OCI-LY7 (cell line): ENCODE measurements at regions of chr16 and their contacts with region 1.

Region 1: GRCh38 chr16:75198135-75198600 is 8.8 kb downstream of the CTRB2 start:
- DNase-seq: no peak
- H3K4me3 ChIP-seq: no peak overlapping the region
- H3K27ac ChIP-seq: no peak overlapping the region
- H3K4me1 ChIP-seq: peaks cover 10% of the 10 kb centered on the region
- CTCF ChIP-seq: no peak

Region 2: DNA sequence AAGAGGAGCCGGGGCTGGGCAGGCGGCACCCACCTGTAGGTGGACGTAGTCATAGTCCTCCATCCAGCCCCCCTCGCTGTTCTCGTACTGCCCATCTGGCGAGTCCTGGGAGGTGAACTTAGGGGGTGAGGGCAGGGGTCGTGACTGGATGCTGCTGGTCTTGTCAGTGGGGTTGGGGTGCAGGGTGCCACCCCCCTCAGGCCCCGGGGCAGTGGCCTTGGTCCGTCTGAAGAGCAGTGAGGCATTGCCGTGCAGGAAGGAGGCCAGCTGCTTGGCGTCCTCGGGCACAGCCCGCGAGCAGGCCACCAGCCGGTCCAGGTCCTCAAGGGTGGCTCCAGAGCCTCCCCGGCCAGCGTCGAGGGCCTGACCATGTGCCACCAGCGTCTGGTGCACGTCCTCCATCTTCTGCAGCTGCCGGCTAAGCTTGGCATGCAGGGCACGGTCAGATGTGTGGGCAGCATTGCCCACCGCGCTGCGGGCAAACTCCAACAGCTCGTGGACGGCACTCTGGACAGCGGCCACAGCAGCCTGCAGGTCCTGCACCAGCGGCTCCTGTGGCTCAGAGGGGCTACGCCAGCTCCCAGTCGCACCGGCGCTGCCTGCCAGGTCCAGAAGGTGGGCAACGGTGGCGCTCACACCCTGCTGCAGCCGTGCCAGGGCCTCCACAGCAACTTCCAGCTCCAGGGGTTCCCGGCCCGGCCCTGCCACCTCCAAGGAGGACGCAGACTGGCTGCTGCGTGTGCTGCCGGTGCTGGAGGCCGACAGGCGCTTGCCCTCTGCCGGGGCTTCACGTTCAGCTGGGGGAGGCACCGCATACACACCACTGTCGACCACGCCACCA is 36.9 kb after region 1 on chr16:
- CTCF ChIA-PET with region 1: interaction called, 8 read pairs
- POLR2A ChIA-PET with region 1: no interaction called
- intact Hi-C with region 1: loop called (anchors 5 kb)
- DNase-seq: no peak
- H3K4me3 ChIP-seq: no peak overlapping the region
- H3K27ac ChIP-seq: no peak overlapping the region
- H3K4me1 ChIP-seq: no peaks in the 10 kb centered on the region
- CTCF ChIP-seq: no peak

Region 3: DNA sequence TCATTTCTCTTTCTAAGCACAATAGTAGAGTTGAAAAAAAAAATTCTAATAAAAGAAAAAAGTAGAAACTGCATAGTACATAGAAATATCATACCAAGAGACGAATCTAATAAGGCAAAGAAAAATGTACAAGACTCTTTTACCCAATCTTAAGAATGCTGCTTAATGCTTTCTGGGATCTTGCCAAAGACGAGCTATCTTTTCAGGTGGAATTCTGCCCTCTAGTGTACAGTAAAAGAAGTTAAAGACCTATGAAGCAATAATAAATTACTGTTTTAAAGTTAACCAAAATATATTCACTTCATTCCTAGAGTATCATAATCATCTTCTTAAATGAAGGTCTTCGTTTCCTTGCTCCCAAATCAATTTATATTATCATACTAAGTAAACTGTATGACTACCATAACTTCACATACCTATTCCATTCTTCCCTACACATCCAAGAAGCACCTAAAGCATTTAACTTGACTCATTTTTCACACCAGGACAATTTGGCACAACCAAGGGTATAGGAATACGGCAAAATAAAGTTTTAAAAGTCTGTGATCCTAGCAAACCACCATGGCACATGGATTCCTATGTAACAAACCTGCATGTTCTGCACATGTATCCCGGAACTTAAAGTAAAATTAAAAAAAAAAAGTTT is 187.5 kb after region 1 on chr16:
- CTCF ChIA-PET with region 1: interaction called, 7 read pairs
- POLR2A ChIA-PET with region 1: interaction called, 4 read pairs
- intact Hi-C with region 1: loop called (anchors 1 kb)
- DNase-seq: peak; percentile 76
- H3K4me3 ChIP-seq: no peak overlapping the region
- H3K27ac ChIP-seq: no peak overlapping the region
- H3K4me1 ChIP-seq: peaks cover 24% of the 10 kb centered on the region
- CTCF ChIP-seq: peak; percentile 94

Region 4: DNA sequence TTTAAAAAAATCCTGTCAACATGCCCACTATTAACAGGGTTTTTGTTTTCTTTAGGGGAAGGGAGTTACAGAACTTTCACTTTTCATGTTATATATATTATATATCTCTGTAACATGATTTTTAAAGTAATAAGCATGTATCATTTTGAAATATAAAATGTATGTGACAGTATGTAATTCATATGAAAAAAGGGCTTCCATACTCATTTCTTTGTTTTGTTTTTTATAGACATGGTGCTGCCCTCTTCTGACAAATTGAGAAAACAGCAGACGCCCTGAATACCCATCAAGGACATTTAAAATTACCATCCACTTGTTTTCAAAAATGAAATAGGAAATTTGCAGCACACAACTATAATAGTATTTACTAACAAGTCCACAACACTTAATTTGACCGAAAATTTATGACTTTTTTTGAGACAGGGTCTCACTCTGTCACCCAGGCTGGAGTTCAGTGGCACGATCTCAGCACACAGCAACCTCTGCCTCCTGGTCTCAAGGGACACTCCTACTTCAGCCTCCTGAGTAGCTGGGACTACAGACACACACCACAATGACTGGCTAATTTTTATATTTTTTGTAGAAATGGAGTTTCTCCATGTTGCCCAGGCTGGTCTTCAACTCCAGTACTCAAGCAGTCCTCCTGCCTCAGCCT is 204.8 kb after region 1 on chr16:
- CTCF ChIA-PET with region 1: no interaction called
- POLR2A ChIA-PET with region 1: no interaction called
- intact Hi-C with region 1: loop called (anchors 1 kb)
- DNase-seq: peak; percentile 42
- H3K4me3 ChIP-seq: no peak overlapping the region
- H3K27ac ChIP-seq: no peak overlapping the region
- H3K4me1 ChIP-seq: no peaks in the 10 kb centered on the region
- CTCF ChIP-seq: peak; percentile 88